ENCODE measurements at regions of chr2 and their contacts with region 1.

Region 1: GRCh38 chr2:136423516-136423996 is 305.6 kb upstream of the CXCR4 start:
- DNase-seq: peak; percentile 43 to 69
- ATAC-seq: peak; percentile 96 to 100
- H3K4me3 ChIP-seq: peak overlapping the region; percentile 43
- H3K27ac ChIP-seq: peak overlapping the region in 1 of 2 experiments; percentile 56; a peak in 1 of 6 replicates
- H3K4me1 ChIP-seq: no peaks in the 10 kb centered on the region
- CTCF ChIP-seq: peak; percentile 78
- EP300 ChIP-seq: no peak
- POLR2A ChIP-seq: no peak
- RAD21 ChIP-seq: peak; percentile 76 to 84

Region 2: GRCh38 chr2:135904341-135904989 is 519.1 kb before region 1 on chr2:
- CTCF ChIA-PET with region 1: no interaction called
- POLR2A ChIA-PET with region 1: no interaction called
- DNase-seq: no peak
- ATAC-seq: peak in 1 of 2 experiments; percentile 47; a peak in 2 of 6 replicates
- H3K4me3 ChIP-seq: no peak overlapping the region
- H3K27ac ChIP-seq: no peak overlapping the region
- H3K4me1 ChIP-seq: no peaks in the 10 kb centered on the region
- CTCF ChIP-seq: no peak
- EP300 ChIP-seq: no peak
- POLR2A ChIP-seq: no peak
- RAD21 ChIP-seq: no peak

Region 3: GRCh38 chr2:136434251-136434715 is 10.7 kb after region 1 on chr2:
- CTCF ChIA-PET with region 1: interaction called, 13 read pairs
- POLR2A ChIA-PET with region 1: no interaction called
- DNase-seq: no peak
- ATAC-seq: no peak
- H3K4me3 ChIP-seq: no peak overlapping the region
- H3K27ac ChIP-seq: no peak overlapping the region
- H3K4me1 ChIP-seq: no peaks in the 10 kb centered on the region
- CTCF ChIP-seq: no peak
- EP300 ChIP-seq: no peak
- POLR2A ChIP-seq: no peak
- RAD21 ChIP-seq: no peak

Region 4: DNA sequence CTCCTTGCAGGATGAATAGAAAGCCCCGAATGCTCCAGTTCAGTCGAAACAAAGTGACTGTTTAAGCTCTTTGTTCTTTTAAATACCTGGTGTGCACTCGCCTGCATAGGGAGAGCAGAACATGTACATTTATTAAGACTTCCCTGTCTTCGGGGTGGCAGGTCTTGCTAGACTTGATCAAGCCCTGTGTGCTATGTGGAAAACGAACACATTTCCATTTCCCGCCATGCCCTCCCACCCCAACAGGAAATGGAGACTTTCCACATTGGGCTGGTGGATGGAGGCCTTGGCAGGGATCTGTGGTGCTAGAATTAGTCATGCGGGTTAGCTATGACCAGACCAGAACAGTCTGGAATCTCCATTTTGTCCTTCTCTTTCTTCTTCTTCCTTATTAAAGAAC is 20.8 kb after region 1 on chr2:
- CTCF ChIA-PET with region 1: interaction called, 10 read pairs
- POLR2A ChIA-PET with region 1: no interaction called
- DNase-seq: no peak
- ATAC-seq: no peak
- H3K4me3 ChIP-seq: no peak overlapping the region
- H3K27ac ChIP-seq: no peak overlapping the region
- H3K4me1 ChIP-seq: no peaks in the 10 kb centered on the region
- CTCF ChIP-seq: no peak
- EP300 ChIP-seq: no peak
- POLR2A ChIP-seq: no peak
- RAD21 ChIP-seq: no peak

Region 5: GRCh38 chr2:136468799-136469369 is 45.3 kb after region 1 on chr2:
- CTCF ChIA-PET with region 1: no interaction called
- POLR2A ChIA-PET with region 1: no interaction called
- DNase-seq: no peak
- ATAC-seq: no peak
- H3K4me3 ChIP-seq: no peak overlapping the region
- H3K27ac ChIP-seq: no peak overlapping the region
- H3K4me1 ChIP-seq: no peaks in the 10 kb centered on the region
- CTCF ChIP-seq: no peak
- EP300 ChIP-seq: no peak
- POLR2A ChIP-seq: no peak
- RAD21 ChIP-seq: no peak

Region 6: DNA sequence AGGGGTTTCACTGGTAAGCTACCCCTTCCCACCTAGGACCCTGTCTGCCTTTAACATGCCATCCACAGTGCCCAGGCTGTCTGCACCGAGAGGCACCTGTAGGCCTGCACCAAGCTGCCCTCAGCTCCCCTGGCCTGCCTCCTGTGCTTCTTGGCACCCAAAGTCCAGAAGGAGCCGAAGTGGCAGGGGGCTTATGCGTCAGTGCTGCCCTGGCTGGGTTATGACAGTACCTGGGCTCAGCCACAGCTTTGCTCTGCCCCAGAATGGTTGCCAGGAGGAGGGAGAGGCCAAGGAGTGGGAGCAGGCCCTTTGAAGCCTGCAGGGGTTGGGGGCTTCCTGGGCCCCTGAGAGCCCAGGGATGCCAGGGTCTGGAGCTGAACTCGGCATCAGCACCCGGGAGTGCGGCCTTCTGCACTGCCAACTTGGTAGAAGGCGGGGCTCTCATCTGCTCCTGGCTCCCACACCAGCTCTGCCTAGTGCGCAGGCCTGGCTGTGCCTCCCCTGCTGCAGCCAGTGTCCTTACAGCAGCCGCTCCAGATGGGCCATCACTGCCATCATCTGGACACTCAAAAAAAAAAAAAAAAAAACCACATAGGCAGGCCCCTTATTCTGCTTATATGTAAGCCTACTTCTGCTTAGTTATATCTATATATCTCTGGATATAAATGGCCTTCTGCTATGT is 497.2 kb after region 1 on chr2:
- CTCF ChIA-PET with region 1: no interaction called
- POLR2A ChIA-PET with region 1: no interaction called
- DNase-seq: no peak
- ATAC-seq: no peak
- H3K4me3 ChIP-seq: no peak overlapping the region
- H3K27ac ChIP-seq: no peak overlapping the region
- H3K4me1 ChIP-seq: no peaks in the 10 kb centered on the region
- CTCF ChIP-seq: no peak
- EP300 ChIP-seq: no peak
- POLR2A ChIP-seq: no peak
- RAD21 ChIP-seq: no peak

Region 7: GRCh38 chr2:137838255-137839092 is 1414.9 kb after region 1 on chr2:
- CTCF ChIA-PET with region 1: interaction called, 11 read pairs
- POLR2A ChIA-PET with region 1: no interaction called
- DNase-seq: peak; percentile 33 to 45
- ATAC-seq: peak; percentile 63 to 84; a peak in 4 of 6 replicates
- H3K4me3 ChIP-seq: no peak overlapping the region
- H3K27ac ChIP-seq: no peak overlapping the region
- H3K4me1 ChIP-seq: no peaks in the 10 kb centered on the region
- CTCF ChIP-seq: peak; percentile 85
- EP300 ChIP-seq: no peak
- POLR2A ChIP-seq: no peak
- RAD21 ChIP-seq: peak; percentile 87 to 88

Measured in A549 (cell line).